GM13976 (cell line): ENCODE measurements at regions of chr7 and their contacts with region 1.

Region 1: GRCh38 chr7:36670585-36671431 is 53.5 kb downstream of the AOAH start:
- DNase-seq: peak; percentile 72
- CTCF ChIP-seq: peak; percentile 81

Region 2: DNA sequence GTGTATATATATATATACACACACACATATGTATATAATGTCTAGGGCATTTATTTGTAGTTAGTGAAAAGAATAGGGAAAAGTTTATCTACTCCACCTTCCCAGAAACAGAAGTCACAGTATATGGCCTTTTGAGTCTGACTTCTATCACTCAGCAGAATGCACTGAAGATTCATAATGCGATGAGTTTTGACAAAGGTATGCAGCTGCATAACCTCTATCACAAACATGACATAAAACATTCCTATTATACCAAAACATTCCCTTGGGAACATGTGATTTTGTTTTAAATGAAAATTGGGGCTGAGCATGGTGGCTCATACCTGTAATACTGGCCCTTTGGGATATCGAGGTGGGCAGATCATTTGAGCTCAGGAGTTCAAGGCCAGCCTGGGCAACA is 655.1 kb before region 1 on chr7:
- in situ Hi-C with region 1: no loop called
- DNase-seq: no peak
- CTCF ChIP-seq: no peak

Region 3: DNA sequence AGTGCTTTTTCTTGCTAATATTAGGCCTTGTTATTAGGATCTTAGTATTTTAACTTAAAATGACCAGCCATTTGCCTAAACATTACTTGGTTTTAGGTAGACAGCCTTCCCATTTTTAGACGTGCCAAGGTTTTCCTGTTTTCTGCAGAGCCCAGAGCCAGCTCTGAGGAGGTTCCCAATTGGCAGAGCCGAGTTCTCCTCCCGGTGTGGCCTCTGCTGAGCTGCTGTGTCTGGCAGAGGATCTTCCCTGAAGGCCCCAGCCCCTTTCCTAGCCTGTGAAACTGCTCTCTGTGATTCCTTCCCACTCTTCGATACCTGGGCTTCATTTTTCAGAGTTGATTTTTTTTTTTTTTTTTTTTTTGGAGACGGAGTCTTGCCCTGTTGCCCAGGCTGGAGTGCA is 426.4 kb before region 1 on chr7:
- in situ Hi-C with region 1: no loop called
- DNase-seq: no peak
- CTCF ChIP-seq: no peak

Region 4: DNA sequence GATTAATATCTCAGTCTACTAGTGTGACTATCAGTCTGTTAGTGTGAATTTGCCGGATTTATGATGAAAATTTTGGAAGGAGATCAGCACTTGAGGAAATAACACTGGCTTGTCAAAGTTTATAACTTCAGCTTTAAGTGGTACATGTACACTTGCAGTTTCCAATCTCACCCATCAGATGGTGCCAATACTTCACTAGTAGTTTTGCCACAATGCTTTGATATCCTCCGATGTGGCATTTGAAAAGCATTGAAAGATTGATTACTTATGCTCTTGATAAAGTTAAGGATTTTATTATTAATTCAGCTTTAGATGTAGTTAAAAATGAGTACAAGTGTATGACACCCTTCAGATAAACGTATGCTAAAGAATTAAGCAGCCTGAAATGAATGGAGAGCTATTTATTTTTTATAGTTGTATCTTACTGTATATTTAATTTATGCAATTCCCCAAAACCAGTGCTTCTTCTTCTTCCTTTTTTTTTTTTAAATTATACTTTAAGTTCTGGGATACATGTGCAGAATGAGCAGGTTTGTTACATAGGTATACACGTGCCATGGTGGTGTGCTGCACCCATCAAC is 183.0 kb before region 1 on chr7:
- in situ Hi-C with region 1: loop called (anchors 10 kb)
- DNase-seq: peak; percentile 36
- CTCF ChIP-seq: peak; percentile 34

Region 5: GRCh38 chr7:36615852-36616540 is 54.8 kb before region 1 on chr7:
- in situ Hi-C with region 1: no loop called
- DNase-seq: no peak
- CTCF ChIP-seq: no peak

Region 6: DNA sequence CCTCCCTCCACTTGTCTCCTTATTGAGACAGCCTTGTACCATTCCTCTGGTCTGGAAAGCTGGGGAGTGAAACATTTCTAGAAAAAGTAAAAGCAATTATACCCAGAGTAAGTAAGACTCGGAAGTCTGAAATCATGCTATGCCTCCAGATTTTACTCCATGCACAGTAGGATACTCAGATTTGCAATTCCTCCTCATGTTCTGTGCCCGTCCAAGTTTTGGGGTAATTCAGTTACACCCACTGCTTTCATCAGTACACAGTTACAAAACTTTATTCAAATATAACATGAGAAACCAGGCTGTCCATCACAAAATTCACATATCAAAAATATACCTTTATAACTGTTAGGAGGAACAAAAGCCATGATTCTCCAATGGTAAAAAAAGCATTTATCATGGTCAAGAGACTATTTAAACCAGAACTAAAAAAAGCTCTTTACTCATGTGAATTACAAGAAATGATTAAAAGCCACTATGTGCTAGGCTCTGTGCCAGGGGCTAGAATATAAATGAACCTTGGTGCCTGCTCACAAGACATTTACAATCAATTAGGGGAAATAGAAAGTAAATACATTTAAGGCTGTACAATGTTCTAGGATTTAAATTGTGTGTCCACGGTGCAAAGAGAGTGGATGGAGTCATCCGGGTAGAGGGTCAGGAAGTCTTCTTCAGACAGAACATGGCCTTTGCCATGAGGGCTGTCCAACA is 457.7 kb after region 1 on chr7:
- in situ Hi-C with region 1: no loop called
- DNase-seq: no peak
- CTCF ChIP-seq: no peak